ENCODE measurements at regions of chr20 and their contacts with region 1.

Region 1: GRCh38 chr20:50987592-50988210 is 29.1 kb downstream of the MOCS3 start:
- DNase-seq: peak; percentile 91
- H3K4me3 ChIP-seq: peak overlapping the region; percentile 15
- H3K27ac ChIP-seq: no peak overlapping the region
- H3K4me1 ChIP-seq: no peaks in the 10 kb centered on the region
- H3K27me3 ChIP-seq: no peaks in the 10 kb centered on the region
- CTCF ChIP-seq: peak; percentile 88

Region 2: DNA sequence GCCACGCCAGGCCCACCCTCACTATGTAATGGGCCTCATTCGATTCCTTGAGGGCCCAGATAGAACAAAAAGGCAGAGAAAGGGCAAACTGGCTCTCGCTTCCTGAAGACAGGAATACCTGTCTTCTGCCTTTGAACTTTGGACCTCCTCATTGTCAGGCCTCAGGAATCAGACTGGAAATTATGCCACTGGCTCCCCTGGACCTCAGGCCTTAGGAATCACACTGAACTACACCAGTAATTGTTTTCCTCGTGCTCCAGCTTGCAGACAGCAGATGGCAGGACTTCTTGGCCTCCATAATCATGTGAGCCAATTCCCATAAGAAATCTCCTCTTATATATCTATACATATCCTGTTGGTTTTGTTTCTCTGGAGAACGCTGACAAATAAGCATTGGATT is 293.8 kb after region 1 on chr20:
- CTCF ChIA-PET with region 1: interaction called, 11 read pairs
- POLR2A ChIA-PET with region 1: no interaction called
- intact Hi-C with region 1: no loop called
- DNase-seq: no peak
- H3K4me3 ChIP-seq: no peak overlapping the region
- H3K27ac ChIP-seq: no peak overlapping the region
- H3K4me1 ChIP-seq: no peaks in the 10 kb centered on the region
- H3K27me3 ChIP-seq: peaks cover 10% of the 10 kb centered on the region
- CTCF ChIP-seq: no peak

Region 3: GRCh38 chr20:51318058-51318895 is 330.6 kb after region 1 on chr20:
- CTCF ChIA-PET with region 1: interaction called, 16 read pairs
- POLR2A ChIA-PET with region 1: no interaction called
- intact Hi-C with region 1: no loop called
- DNase-seq: peak; percentile 75
- H3K4me3 ChIP-seq: no peak overlapping the region
- H3K27ac ChIP-seq: no peak overlapping the region
- H3K4me1 ChIP-seq: no peaks in the 10 kb centered on the region
- H3K27me3 ChIP-seq: no peaks in the 10 kb centered on the region
- CTCF ChIP-seq: peak; percentile 91

Region 4: DNA sequence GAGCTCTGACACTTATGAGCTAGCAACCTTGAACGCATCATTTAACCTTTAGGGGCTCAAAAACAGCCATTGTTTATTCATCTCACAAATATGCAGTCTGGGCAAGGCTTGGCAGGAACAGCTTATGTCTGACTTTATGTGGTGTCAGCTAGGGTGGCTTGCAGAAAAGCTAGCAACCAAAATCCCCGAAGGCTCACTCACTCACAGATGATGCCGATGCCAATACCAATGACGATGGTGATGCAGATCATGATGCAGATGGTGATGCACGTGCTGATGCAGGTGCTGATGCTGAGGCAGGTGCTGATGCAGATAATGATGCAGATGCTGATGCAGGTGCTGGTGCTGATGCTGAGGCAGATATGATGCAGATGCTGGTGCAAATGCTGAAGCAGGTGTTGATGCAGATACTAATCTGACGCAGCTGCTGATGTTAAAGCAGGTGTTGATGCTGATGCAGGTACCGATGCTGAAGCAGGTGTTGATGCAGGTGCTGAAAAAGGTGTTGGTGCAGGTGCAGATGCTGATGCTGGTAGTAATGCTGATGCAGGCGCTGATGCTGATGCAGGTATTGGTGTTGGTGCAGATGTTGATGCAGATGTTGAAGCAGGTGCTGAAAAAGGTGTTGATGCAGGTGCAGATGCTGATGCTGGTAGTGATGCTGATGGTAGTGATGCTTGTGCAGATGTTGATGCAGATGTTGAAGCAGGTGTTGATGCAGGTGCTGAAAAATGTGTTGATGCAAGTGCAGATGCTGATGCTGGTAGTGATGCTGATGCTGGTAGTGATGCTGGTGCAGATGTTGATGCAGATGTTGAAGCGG is 359.2 kb after region 1 on chr20:
- CTCF ChIA-PET with region 1: interaction called, 11 read pairs
- POLR2A ChIA-PET with region 1: no interaction called
- intact Hi-C with region 1: no loop called
- DNase-seq: no peak
- H3K4me3 ChIP-seq: no peak overlapping the region
- H3K27ac ChIP-seq: no peak overlapping the region
- H3K4me1 ChIP-seq: no peaks in the 10 kb centered on the region
- H3K27me3 ChIP-seq: no peaks in the 10 kb centered on the region
- CTCF ChIP-seq: no peak

Region 5: DNA sequence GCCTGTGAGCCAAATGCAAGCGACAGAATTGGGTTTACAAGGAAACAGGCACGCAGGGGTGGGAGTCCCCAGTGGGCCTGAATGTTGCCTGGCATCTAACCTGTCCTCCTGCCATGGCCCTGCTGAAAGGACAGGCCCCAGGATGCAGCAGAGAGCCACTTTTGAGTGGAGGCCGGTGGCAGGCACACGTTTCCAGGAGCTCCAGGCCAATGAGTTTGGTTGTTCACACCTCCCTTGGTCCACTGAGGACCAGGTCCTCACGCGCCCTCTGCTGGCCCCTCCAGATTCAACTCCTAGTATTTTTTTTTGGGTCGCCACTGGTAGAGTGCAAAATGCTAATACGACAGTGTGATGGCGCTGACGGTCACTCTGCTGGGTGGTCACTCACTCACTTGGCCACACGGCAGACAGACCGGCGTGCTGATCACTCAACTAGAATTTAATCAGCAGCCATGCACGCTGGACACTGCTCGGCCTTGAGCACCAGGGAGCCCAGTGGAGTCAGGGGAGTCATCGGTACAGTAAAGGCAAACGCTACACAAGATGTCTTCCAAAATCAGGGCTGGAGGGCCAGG is 636.5 kb after region 1 on chr20:
- CTCF ChIA-PET with region 1: interaction called, 18 read pairs
- POLR2A ChIA-PET with region 1: no interaction called
- intact Hi-C with region 1: loop called (anchors 5 kb)
- DNase-seq: peak; percentile 77
- H3K4me3 ChIP-seq: no peak overlapping the region
- H3K27ac ChIP-seq: no peak overlapping the region
- H3K4me1 ChIP-seq: peaks cover 3% of the 10 kb centered on the region
- H3K27me3 ChIP-seq: no peaks in the 10 kb centered on the region
- CTCF ChIP-seq: peak; percentile 81

Measured in A673 (cell line).